Activated CD8-positive, alpha-beta memory T cell treated with anti-CD3 and anti-CD28 coated beads, Interleukin-2, amount 10 ng/mL, durations not matched to agents 7 days and 5 days (primary cell): ENCODE measurements at regions of chr17 and their contacts with region 1.

Region 1: GRCh38 chr17:39153599-39154051 is 2.2 kb upstream of the PLXDC1 start:
- DNase-seq: peak; percentile 95
- ATAC-seq: peak; percentile 58
- H3K4me3 Mint-ChIP-seq: peak overlapping the region; percentile 82
- H3K27ac Mint-ChIP-seq: peak overlapping the region; percentile 87
- H3K4me1 Mint-ChIP-seq: peaks cover 30% of the 10 kb centered on the region
- H3K27me3 Mint-ChIP-seq: peaks cover 25% of the 10 kb centered on the region

Region 2: DNA sequence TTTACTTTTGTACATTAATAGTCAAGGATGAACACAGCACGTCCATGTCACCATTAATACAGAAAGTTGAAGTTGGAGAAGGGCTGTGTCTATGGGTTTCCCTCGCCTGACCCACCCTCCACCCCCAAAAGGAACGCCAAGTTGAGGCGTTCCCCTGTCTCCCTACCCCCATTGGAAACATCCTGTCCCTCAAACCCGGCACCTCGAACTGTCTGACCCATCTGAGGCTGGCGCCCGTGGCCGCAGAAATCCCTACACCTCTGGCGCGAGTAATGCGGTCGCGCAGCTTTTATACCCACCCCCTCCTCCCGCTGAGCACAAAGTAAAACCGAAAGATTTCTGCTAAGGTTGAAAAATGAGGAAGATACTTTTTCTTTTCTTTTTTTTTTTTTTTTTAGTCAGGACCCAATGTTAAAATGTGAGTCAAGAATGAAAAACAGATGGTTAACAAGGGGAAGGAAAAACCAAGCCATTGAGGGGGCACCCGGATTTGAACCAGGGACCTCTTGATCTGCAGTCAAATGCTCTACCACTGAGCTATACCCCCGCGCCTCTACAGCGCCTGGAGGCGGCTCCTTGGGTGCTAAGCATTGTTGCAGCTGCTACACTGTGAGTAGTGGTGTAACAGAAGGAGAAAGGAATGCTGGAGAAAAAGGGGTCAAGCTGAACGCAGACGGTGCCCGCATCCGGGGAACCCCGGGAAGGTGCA is 284.7 kb before region 1 on chr17:
- CTCF ChIA-PET with region 1: interaction called, 33 read pairs
- DNase-seq: peak; percentile 93
- ATAC-seq: peak; percentile 51
- H3K4me3 Mint-ChIP-seq: peak overlapping the region; percentile 88
- H3K27ac Mint-ChIP-seq: peak overlapping the region; percentile 92
- H3K4me1 Mint-ChIP-seq: peaks cover 44% of the 10 kb centered on the region
- H3K27me3 Mint-ChIP-seq: peaks cover 2% of the 10 kb centered on the region

Region 3: DNA sequence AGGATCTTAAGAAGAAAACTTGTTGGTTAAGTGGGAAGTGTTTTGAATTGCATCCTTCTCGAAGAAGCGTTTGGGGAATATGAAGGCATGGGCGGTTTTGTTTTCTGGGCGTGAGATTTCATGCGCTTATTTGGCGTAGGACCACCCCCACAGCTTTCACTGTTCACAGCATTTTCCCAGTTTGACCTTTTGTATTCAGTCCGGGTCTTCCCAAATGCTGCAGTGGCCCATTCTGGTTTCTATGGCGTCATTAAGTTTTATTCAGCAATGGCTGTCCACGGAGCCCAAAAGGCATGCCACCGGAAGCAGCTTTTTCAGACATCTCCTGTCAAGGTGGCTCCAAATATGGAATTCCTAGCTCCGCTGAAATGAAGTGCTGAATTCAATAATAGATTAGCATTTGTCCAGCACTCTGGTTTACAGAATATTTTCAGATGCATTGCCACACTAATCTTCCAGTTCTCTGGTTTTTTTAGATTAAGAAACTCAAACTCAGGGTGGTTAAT is 95.9 kb before region 1 on chr17:
- CTCF ChIA-PET with region 1: interaction called, 49 read pairs
- DNase-seq: no peak
- ATAC-seq: no peak
- H3K4me3 Mint-ChIP-seq: peak overlapping the region; percentile 74
- H3K27ac Mint-ChIP-seq: peak overlapping the region; percentile 82
- H3K4me1 Mint-ChIP-seq: peaks cover 19% of the 10 kb centered on the region
- H3K27me3 Mint-ChIP-seq: peaks cover 13% of the 10 kb centered on the region

Region 4: GRCh38 chr17:39096508-39097149 is 57.0 kb before region 1 on chr17:
- CTCF ChIA-PET with region 1: interaction called, 28 read pairs
- DNase-seq: peak; percentile 87
- ATAC-seq: peak; percentile 57
- H3K4me3 Mint-ChIP-seq: peak overlapping the region; percentile 64
- H3K27ac Mint-ChIP-seq: peak overlapping the region; percentile 92
- H3K4me1 Mint-ChIP-seq: peaks cover 57% of the 10 kb centered on the region
- H3K27me3 Mint-ChIP-seq: peaks cover 6% of the 10 kb centered on the region

Region 5: GRCh38 chr17:39270923-39271322 is 117.3 kb after region 1 on chr17:
- CTCF ChIA-PET with region 1: no interaction called
- DNase-seq: no peak
- ATAC-seq: no peak
- H3K4me3 Mint-ChIP-seq: no peak overlapping the region
- H3K27ac Mint-ChIP-seq: no peak overlapping the region
- H3K4me1 Mint-ChIP-seq: no peaks in the 10 kb centered on the region
- H3K27me3 Mint-ChIP-seq: no peaks in the 10 kb centered on the region